GM12878 (cell line): ENCODE measurements at regions of chr2 and their contacts with region 1.

Region 1: GRCh38 chr2:189698020-189698887 is 23.8 kb downstream of the ANKAR start:
- DNase-seq: no peak
- ATAC-seq: peak; percentile 88
- H3K4me3 ChIP-seq: no peak overlapping the region
- H3K27ac ChIP-seq: no peak overlapping the region
- H3K4me1 ChIP-seq: no peaks in the 10 kb centered on the region
- H3K27me3 ChIP-seq: no peaks in the 10 kb centered on the region
- CTCF ChIP-seq: peak; percentile 35 to 49 (median 37); a peak in 5 of 6 replicates
- EP300 ChIP-seq: no peak
- POLR2A ChIP-seq: no peak
- RAD21 ChIP-seq: peak; percentile 44

Region 2: DNA sequence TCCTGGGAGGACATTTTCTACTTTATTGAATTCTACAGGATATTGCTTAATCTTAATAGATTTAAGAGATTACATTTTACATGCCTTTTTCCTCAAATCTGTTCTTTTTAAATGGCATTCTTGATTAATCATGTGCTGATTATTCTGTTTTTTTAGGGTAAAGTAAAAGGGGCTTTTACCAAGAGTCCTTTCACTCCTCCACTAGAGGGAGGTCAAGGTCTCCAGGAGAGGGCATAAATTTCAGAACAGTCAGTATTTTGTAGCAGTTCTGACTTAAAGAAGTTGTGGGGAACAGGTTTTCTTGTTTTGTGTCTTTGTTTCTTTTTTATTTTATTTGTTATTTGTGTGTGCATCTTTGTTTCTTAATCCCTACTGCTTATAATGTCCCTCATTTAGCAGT is 231.6 kb before region 1 on chr2:
- CTCF ChIA-PET with region 1: no interaction called
- POLR2A ChIA-PET with region 1: no interaction called
- RAD21 ChIA-PET with region 1: no interaction called
- SMC1A ChIA-PET with region 1: no interaction called
- in situ Hi-C with region 1: no loop called
- intact Hi-C with region 1: no loop called
- DNase-seq: no peak
- ATAC-seq: peak; percentile 75
- H3K4me3 ChIP-seq: no peak overlapping the region
- H3K27ac ChIP-seq: no peak overlapping the region
- H3K4me1 ChIP-seq: peaks cover 12% of the 10 kb centered on the region; the same call in 1 of the 2 replicates
- H3K27me3 ChIP-seq: no peaks in the 10 kb centered on the region
- CTCF ChIP-seq: peak; percentile 37 to 47 (median 47)
- EP300 ChIP-seq: no peak
- POLR2A ChIP-seq: no peak
- RAD21 ChIP-seq: peak; percentile 40; the same call in 1 of the 2 replicates

Region 3: DNA sequence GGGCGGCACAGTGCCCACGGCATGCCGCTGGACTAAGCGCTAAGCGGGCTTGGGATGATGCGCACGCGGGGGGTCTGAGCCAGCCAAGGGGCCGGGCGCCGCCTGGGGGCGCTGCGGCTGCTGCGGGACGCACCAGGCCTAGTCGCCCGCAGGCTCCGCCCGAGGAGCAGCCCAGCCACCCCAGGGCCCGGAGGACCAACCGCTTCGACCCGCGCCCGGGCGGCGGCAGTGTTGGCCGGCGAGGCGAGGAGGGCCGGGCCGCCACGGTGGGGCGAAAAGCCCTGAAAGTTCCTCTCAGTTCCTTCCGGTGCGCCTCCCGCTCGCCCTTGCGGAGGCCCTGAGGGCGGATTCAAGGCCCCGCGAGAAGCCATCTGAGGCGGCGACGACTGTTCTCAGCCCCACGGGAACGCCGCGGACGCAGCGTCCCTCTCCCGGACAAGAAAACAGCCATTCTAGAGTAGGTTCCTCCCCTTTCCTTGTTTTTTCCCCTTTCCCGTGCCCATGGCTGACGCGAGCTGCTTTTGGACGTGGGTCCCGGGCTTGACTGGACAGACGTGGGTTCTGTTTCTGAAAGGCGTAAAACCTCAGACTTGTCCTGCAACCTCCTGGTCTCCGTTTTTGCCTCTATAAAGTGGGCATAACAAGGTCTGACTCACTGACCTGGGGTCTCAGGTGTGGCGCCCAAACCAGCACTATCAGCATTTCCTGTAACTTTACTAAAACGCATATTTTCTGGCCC is 23.7 kb before region 1 on chr2 and contains the start of gene ANKAR:
- CTCF ChIA-PET with region 1: interaction called, 47 read pairs
- POLR2A ChIA-PET with region 1: interaction called, 3 read pairs
- RAD21 ChIA-PET with region 1: interaction called, 8 read pairs
- SMC1A ChIA-PET with region 1: interaction called, 19 read pairs
- in situ Hi-C with region 1: no loop called
- intact Hi-C with region 1: loop called (anchors 2 kb)
- DNase-seq: peak; percentile 36
- ATAC-seq: peak; percentile 98
- H3K4me3 ChIP-seq: peak within 1 kb of the TSS; percentile 76
- H3K27ac ChIP-seq: peak within 1 kb of the TSS; percentile 93
- H3K4me1 ChIP-seq: peaks cover 3% of the 10 kb centered on the region; the same call in 1 of the 2 replicates
- H3K27me3 ChIP-seq: no peaks in the 10 kb centered on the region
- CTCF ChIP-seq: peak; percentile 76 to 80 (median 76); a peak in 5 of 6 replicates
- EP300 ChIP-seq: no peak
- POLR2A ChIP-seq: peak; percentile 84
- RAD21 ChIP-seq: peak; percentile 40; the same call in 1 of the 2 replicates
- polyA plus RNA-seq, gene ANKAR: 1.3 to 2.9 TPM

Region 4: GRCh38 chr2:189683363-189683762 is 14.9 kb before region 1 on chr2:
- CTCF ChIA-PET with region 1: interaction called, 45 read pairs
- POLR2A ChIA-PET with region 1: interaction called, 3 read pairs
- RAD21 ChIA-PET with region 1: interaction called, 3 read pairs
- SMC1A ChIA-PET with region 1: interaction called, 8 read pairs
- in situ Hi-C with region 1: no loop called
- intact Hi-C with region 1: no loop called
- DNase-seq: no peak
- ATAC-seq: no peak
- H3K4me3 ChIP-seq: no peak overlapping the region
- H3K27ac ChIP-seq: no peak overlapping the region
- H3K4me1 ChIP-seq: peaks cover 5% of the 10 kb centered on the region; the same call in 1 of the 2 replicates
- H3K27me3 ChIP-seq: no peaks in the 10 kb centered on the region
- CTCF ChIP-seq: no peak
- EP300 ChIP-seq: no peak
- POLR2A ChIP-seq: no peak
- RAD21 ChIP-seq: no peak